Tibial artery (tissue), 4 donors: ENCODE measurements at regions of chr20 and their contacts with region 1.

Region 1: DNA sequence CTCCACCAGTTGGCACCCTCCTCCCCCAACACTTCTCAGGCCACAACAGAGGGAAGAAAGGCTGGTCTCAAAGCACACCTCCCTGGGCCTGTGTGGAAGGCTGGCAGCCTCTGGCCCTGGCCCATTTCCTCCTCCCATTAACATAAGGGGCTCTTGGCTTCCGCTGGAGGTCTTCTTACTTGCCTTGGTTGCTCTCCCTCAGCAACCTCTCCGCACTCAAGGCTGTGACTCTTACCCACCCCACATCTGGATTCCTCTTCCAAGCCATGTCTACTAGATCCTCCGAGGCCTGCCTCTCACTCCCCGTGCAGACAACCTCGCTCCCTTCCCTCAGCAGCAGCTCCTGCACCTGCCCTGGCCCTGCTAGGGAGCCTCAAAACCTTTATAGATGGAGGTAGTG is 112.2 kb upstream of the PRND start:
- DNase-seq: no peak
- H3K4me3 ChIP-seq: no peak overlapping the region
- H3K27ac ChIP-seq: no peak overlapping the region
- H3K4me1 ChIP-seq: peaks cover 0 to 8% (median 3%) of the 10 kb centered on the region in 4 donors
- H3K27me3 ChIP-seq: peaks cover 0 to 3% of the 10 kb centered on the region in 2 donors
- CTCF ChIP-seq: no peak

Region 2: DNA sequence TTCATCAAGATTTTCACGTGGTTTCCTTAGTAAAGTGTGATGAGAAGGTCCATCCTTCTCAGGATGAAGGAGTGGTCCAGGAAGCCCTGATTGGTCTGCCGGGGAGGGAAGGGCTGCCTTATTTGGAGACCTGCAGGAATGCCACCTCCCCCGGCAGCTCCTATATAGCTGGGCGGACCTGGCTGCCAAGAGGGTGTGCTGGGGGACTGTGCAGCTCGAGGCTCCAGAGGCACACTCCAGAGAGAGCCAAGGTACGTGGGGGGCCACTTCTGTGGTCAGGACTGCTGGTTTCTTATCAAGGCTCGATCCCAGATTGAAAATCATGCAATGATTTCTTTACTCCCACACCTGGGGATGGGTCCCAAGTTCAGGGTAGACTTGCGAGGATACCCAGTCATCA is 112.2 kb after region 1 on chr20 and contains the start of gene PRND:
- intact Hi-C with region 1: loop called (anchors 2 kb)
- DNase-seq: no peak
- H3K4me3 ChIP-seq: no peak within 1 kb of the TSS
- H3K27ac ChIP-seq: no peak within 1 kb of the TSS
- H3K4me1 ChIP-seq: peaks cover 0 to 9% (median 3%) of the 10 kb centered on the region in 4 donors
- H3K27me3 ChIP-seq: peaks cover 0 to 17% of the 10 kb centered on the region in 2 donors
- CTCF ChIP-seq: no peak